MCF 10A (cell line): ENCODE measurements at regions of chr13 and their contacts with region 1.

Region 1: GRCh38 chr13:50222569-50223332 is 207.5 kb downstream of the KCNRG start:
- DNase-seq: peak; percentile 95
- H3K4me3 Mint-ChIP-seq: peak overlapping the region; percentile 72
- H3K27ac Mint-ChIP-seq: peak overlapping the region; percentile 98
- H3K4me1 Mint-ChIP-seq: peaks cover 40% of the 10 kb centered on the region
- H3K27me3 Mint-ChIP-seq: no peaks in the 10 kb centered on the region
- CTCF ChIP-seq: no peak

Region 2: DNA sequence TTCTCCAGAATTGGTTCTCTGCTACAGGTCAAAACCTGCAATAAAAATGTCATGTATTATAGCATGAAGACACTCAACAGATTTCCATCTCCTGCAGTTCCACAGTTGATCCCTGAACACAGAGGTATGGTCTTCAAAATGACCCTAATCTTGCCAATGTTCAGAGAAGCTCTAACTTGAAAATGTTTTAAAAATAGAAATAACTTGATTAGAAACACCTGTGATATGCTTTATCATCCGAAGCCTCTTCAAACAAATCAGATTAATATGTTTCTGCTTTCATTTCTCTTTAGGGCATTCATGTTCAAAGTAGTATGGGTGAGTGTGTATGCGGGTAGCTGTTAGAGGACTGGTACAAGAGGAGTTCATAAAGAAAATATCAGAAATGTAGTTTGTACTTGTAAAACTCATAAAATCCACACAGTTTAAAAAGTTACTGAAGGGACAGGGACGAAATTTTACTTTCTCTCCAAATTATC is 147.1 kb before region 1 on chr13:
- CTCF ChIA-PET with region 1: no interaction called
- POLR2A ChIA-PET with region 1: interaction called, 35 read pairs
- intact Hi-C with region 1: loop called (anchors 5 kb)
- DNase-seq: peak; percentile 47
- H3K4me3 Mint-ChIP-seq: peak overlapping the region; percentile 97
- H3K27ac Mint-ChIP-seq: peak overlapping the region; percentile 99
- H3K4me1 Mint-ChIP-seq: peaks cover 10% of the 10 kb centered on the region
- H3K27me3 Mint-ChIP-seq: no peaks in the 10 kb centered on the region
- CTCF ChIP-seq: no peak

Region 3: GRCh38 chr13:50198508-50198907 is 24.2 kb before region 1 on chr13:
- CTCF ChIA-PET with region 1: interaction called, 3 read pairs
- POLR2A ChIA-PET with region 1: interaction called, 3 read pairs
- intact Hi-C with region 1: loop called (anchors 1 kb)
- DNase-seq: peak; percentile 97
- H3K4me3 Mint-ChIP-seq: no peak overlapping the region
- H3K27ac Mint-ChIP-seq: peak overlapping the region; percentile 18
- H3K4me1 Mint-ChIP-seq: peaks cover 19% of the 10 kb centered on the region
- H3K27me3 Mint-ChIP-seq: no peaks in the 10 kb centered on the region
- CTCF ChIP-seq: no peak

Region 4: GRCh38 chr13:50208826-50209335 is 13.9 kb before region 1 on chr13:
- CTCF ChIA-PET with region 1: no interaction called
- POLR2A ChIA-PET with region 1: interaction called, 54 read pairs
- intact Hi-C with region 1: no loop called
- DNase-seq: peak; percentile 57
- H3K4me3 Mint-ChIP-seq: peak overlapping the region; percentile 70
- H3K27ac Mint-ChIP-seq: peak overlapping the region; percentile 91
- H3K4me1 Mint-ChIP-seq: peaks cover 16% of the 10 kb centered on the region
- H3K27me3 Mint-ChIP-seq: no peaks in the 10 kb centered on the region
- CTCF ChIP-seq: no peak

Region 5: GRCh38 chr13:50236898-50237318 is 14.2 kb after region 1 on chr13:
- CTCF ChIA-PET with region 1: interaction called, 3 read pairs
- POLR2A ChIA-PET with region 1: interaction called, 11 read pairs
- intact Hi-C with region 1: no loop called
- DNase-seq: no peak
- H3K4me3 Mint-ChIP-seq: no peak overlapping the region
- H3K27ac Mint-ChIP-seq: no peak overlapping the region
- H3K4me1 Mint-ChIP-seq: no peaks in the 10 kb centered on the region
- H3K27me3 Mint-ChIP-seq: no peaks in the 10 kb centered on the region
- CTCF ChIP-seq: no peak

Region 6: GRCh38 chr13:50244713-50245574 is 22.2 kb after region 1 on chr13:
- CTCF ChIA-PET with region 1: interaction called, 3 read pairs
- POLR2A ChIA-PET with region 1: interaction called, 14 read pairs
- intact Hi-C with region 1: no loop called
- DNase-seq: peak; percentile 97
- H3K4me3 Mint-ChIP-seq: no peak overlapping the region
- H3K27ac Mint-ChIP-seq: peak overlapping the region; percentile 65
- H3K4me1 Mint-ChIP-seq: peaks cover 18% of the 10 kb centered on the region
- H3K27me3 Mint-ChIP-seq: no peaks in the 10 kb centered on the region
- CTCF ChIP-seq: no peak

Region 7: DNA sequence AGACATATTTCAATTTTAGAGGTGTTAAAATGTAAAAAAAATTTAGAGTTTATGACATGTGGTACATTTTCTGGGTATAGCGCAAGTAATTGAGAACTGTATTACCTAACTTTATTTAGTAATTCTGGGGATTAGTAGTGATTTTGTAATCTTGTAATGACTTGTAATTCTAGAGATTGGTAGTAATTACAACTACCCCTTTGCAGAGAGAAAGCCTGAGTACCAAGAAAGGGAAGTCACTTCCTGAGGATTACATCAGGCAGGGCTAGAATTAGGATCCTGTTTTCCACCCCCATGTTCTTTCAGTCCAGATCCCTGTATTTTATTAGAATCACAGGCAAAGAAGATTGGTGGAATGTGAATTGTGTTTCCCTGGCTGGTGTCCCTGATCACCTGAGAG is 67.4 kb after region 1 on chr13:
- CTCF ChIA-PET with region 1: no interaction called
- POLR2A ChIA-PET with region 1: no interaction called
- intact Hi-C with region 1: no loop called
- DNase-seq: no peak
- H3K4me3 Mint-ChIP-seq: no peak overlapping the region
- H3K27ac Mint-ChIP-seq: no peak overlapping the region
- H3K4me1 Mint-ChIP-seq: no peaks in the 10 kb centered on the region
- H3K27me3 Mint-ChIP-seq: no peaks in the 10 kb centered on the region
- CTCF ChIP-seq: no peak